Common myeloid progenitor, CD34-positive (primary cell): ENCODE measurements at regions of chr3 and their contacts with region 1.

Region 1: GRCh38 chr3:100590114-100590839 is 19.1 kb upstream of the ADGRG7 start:
- DNase-seq: peak; percentile 71 to 88 (median 81)
- H3K4me3 ChIP-seq: peak overlapping the region in 2 of 7 experiments; percentile 33 to 51
- H3K27ac ChIP-seq: no peak overlapping the region
- H3K4me1 ChIP-seq: peaks cover 0 to 3% (median 1%) of the 10 kb centered on the region in 4 experiments
- H3K27me3 ChIP-seq: no peaks in the 10 kb centered on the region

Region 2: GRCh38 chr3:100455841-100456550 is 134.3 kb before region 1 on chr3:
- CTCF ChIA-PET with region 1: interaction called, 73 read pairs
- POLR2A ChIA-PET with region 1: no interaction called
- DNase-seq: peak in 2 of 3 donors; percentile 48 to 60
- H3K4me3 ChIP-seq: no peak overlapping the region
- H3K27ac ChIP-seq: no peak overlapping the region
- H3K4me1 ChIP-seq: peaks cover 0 to 9% (median 8%) of the 10 kb centered on the region in 4 experiments
- H3K27me3 ChIP-seq: no peaks in the 10 kb centered on the region

Region 3: DNA sequence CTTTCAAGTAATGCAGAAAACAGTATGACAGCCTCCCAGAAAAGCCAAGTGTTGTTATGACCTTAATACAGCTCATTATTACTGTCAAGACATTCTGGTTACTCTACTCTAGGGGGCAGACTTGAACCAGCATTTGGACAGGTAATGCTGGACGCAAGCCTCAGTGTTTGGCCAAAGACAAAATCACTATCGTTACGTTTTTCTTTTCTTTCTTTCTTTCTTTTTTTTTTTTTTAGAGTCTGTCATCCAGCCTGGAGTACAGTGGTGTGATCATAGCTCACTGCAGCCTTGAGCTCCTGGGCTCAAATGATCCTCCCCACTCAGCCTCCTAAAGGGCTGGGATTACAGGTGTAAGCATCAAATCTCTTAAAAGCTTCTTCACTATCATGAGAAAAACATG is 127.3 kb before region 1 on chr3:
- CTCF ChIA-PET with region 1: interaction called, 73 read pairs
- POLR2A ChIA-PET with region 1: no interaction called
- DNase-seq: peak; percentile 47 to 75 (median 72)
- H3K4me3 ChIP-seq: no peak overlapping the region
- H3K27ac ChIP-seq: no peak overlapping the region
- H3K4me1 ChIP-seq: peaks cover 0 to 1% (median 0%) of the 10 kb centered on the region in 4 experiments
- H3K27me3 ChIP-seq: no peaks in the 10 kb centered on the region

Region 4: DNA sequence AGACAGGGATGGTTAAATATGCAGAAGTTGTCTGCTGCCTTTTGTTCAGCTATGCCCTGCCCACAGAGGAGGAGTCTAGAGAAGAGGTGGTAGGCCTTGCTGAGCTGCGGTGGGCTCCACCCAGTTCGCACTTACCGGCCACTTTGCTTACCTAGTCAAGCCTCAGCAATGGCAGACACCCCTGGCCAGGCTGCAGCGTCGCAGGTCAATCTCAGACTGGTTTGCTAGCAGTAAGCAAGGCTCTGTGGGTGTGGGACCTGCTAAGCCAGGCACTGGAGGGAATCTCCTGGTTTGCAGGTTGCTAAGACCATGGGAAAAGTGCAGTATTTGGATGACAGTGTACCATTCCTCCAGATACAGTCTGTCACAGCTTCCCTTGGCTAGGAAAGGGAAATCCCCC is 110.2 kb before region 1 on chr3:
- CTCF ChIA-PET with region 1: no interaction called
- POLR2A ChIA-PET with region 1: no interaction called
- DNase-seq: no peak
- H3K4me3 ChIP-seq: no peak overlapping the region
- H3K27ac ChIP-seq: no peak overlapping the region
- H3K4me1 ChIP-seq: no peaks in the 10 kb centered on the region
- H3K27me3 ChIP-seq: no peaks in the 10 kb centered on the region

Region 5: GRCh38 chr3:100603469-100603868 is 13.2 kb after region 1 on chr3:
- CTCF ChIA-PET with region 1: interaction called, 12 read pairs
- POLR2A ChIA-PET with region 1: interaction called, 5 read pairs
- DNase-seq: peak; percentile 29 to 57 (median 46)
- H3K4me3 ChIP-seq: peak overlapping the region in 5 of 7 experiments; percentile 11 to 70 (median 46)
- H3K27ac ChIP-seq: peak overlapping the region in 1 of 2 experiments; percentile 70
- H3K4me1 ChIP-seq: peaks cover 7 to 23% (median 19%) of the 10 kb centered on the region in 4 experiments
- H3K27me3 ChIP-seq: no peaks in the 10 kb centered on the region